Calu3 (cell line): ENCODE measurements at regions of chr3 and their contacts with region 1.

Region 1: DNA sequence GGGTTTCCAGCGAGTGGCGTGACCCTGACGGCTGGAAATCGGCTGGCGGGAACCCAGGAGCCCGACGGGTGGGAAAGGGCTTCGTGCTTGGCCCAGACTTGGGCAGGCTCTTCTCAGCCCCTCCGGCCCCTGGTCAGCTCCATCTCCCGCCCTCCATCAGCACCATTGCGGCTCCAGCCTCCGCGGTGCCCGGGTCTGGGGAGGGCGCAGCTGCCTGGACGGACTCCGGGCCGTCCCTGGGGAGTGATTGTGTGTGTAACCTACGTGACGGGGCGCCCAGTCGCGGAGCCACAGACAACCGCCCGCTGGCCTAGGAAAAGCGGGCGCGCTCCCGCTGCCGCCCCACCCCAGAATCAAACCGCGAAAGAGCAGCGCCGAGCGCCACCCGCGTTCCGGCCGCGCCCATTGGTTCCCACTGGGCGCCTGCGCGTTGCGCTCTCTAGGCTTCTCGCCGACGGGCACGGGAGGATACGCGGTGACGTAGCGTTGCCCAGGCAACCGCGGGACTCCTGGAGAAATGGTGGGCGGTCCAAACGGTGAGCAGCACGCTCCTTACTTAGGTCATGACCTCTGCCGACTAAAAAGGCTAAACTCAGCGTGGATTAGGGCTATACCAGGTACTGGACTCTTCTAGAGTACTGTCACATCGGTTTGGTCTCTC is at the start of gene CFAP20DC:
- DNase-seq: peak; percentile 94
- H3K4me3 Mint-ChIP-seq: peak within 1 kb of the TSS; percentile 71
- H3K27ac Mint-ChIP-seq: peak within 1 kb of the TSS; percentile 79
- H3K4me1 Mint-ChIP-seq: peaks cover 30% of the 10 kb centered on the region
- H3K27me3 Mint-ChIP-seq: no peaks in the 10 kb centered on the region
- CTCF ChIP-seq: no peak
- total RNA-seq, gene CFAP20DC: 5.8 and 5.9 TPM in 2 replicates

Region 2: DNA sequence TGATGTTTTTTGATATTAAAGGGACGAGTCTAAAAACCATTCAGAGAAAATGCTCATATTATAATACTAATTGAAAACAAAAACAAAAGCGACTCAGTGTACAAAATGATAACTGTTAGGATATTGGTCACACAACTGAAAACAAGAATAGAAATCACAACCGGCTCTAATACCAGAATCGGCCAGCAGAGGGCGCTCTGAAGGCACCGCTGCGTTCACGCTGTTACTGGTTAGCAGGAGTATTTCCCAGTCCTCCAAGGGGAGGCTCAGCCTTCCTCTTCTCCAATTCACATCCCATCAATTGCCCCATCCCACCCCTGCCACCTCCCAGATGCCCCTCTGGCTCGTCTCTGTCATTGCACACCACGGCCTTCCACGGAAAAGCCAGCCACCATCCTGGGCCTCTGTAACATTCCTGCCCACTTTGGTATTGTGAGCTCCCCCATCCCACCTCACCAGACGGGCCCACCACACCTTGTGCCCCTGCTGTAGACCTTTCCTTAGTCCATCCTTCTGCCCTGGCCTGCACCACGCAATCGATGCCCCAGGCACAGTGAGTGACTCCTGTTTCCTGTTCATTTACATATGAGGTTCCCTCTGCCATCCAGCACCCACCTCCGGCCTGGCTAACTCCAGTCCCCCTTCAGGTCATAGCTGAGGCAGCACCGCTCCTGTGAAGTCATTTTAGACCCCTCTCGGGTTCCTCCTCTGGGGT is 481.1 kb before region 1 on chr3:
- CTCF ChIA-PET with region 1: interaction called, 3 read pairs
- intact Hi-C with region 1: loop called (anchors 10 kb)
- DNase-seq: peak; percentile 80
- H3K4me3 Mint-ChIP-seq: peak overlapping the region; percentile 29
- H3K27ac Mint-ChIP-seq: no peak overlapping the region
- H3K4me1 Mint-ChIP-seq: peaks cover 30% of the 10 kb centered on the region
- H3K27me3 Mint-ChIP-seq: peaks cover under 1% of the 10 kb centered on the region
- CTCF ChIP-seq: peak; percentile 81

Region 3: GRCh38 chr3:58640700-58641372 is 409.0 kb before region 1 on chr3:
- CTCF ChIA-PET with region 1: interaction called, 8 read pairs
- intact Hi-C with region 1: loop called (anchors 2 kb)
- DNase-seq: peak; percentile 84
- H3K4me3 Mint-ChIP-seq: no peak overlapping the region
- H3K27ac Mint-ChIP-seq: no peak overlapping the region
- H3K4me1 Mint-ChIP-seq: peaks cover 7% of the 10 kb centered on the region
- H3K27me3 Mint-ChIP-seq: peaks cover 7% of the 10 kb centered on the region
- CTCF ChIP-seq: peak; percentile 76

Region 4: GRCh38 chr3:58824285-58824684 is 225.5 kb before region 1 on chr3:
- CTCF ChIA-PET with region 1: interaction called, 9 read pairs
- intact Hi-C with region 1: loop called (anchors 2 kb)
- DNase-seq: peak; percentile 70
- H3K4me3 Mint-ChIP-seq: no peak overlapping the region
- H3K27ac Mint-ChIP-seq: no peak overlapping the region
- H3K4me1 Mint-ChIP-seq: peaks cover 11% of the 10 kb centered on the region
- H3K27me3 Mint-ChIP-seq: no peaks in the 10 kb centered on the region
- CTCF ChIP-seq: peak; percentile 46